GM12878 (cell line): ENCODE measurements at regions of chr11 and their contacts with region 1.

Region 1: DNA sequence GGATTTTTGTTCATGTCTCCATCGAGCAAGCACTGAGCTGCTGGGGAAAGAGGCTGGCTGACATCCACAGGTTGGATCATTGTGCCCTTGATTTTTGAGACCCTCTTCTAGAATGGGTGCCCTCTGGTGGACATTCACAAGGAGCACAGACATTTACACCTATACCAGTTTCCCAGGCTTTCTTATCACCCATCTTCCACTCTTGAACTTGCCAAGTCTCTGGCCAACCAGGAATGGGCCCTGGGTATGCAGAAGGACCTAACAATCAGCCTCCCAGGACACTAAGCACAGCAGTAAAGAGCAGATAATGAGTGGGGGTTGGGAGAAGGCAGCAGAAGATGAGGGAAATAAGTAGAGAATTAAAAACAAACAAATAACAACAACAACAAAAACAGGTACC is 5.7 kb upstream of the INTS4 start:
- DNase-seq: no peak
- ATAC-seq: peak; percentile 96
- H3K4me3 ChIP-seq: no peak overlapping the region
- H3K27ac ChIP-seq: no peak overlapping the region
- H3K4me1 ChIP-seq: no peaks in the 10 kb centered on the region
- H3K27me3 ChIP-seq: no peaks in the 10 kb centered on the region
- CTCF ChIP-seq: peak; percentile 64 to 71 (median 67)
- EP300 ChIP-seq: no peak
- POLR2A ChIP-seq: no peak
- RAD21 ChIP-seq: peak; percentile 51

Region 2: GRCh38 chr11:77776455-77776854 is 223.7 kb before region 1 on chr11:
- CTCF ChIA-PET with region 1: interaction called, 14 read pairs
- POLR2A ChIA-PET with region 1: no interaction called
- RAD21 ChIA-PET with region 1: interaction called, 4 read pairs
- SMC1A ChIA-PET with region 1: interaction called, 11 read pairs
- in situ Hi-C with region 1: loop called (anchors 5 kb)
- intact Hi-C with region 1: loop called (anchors 1 kb)
- DNase-seq: no peak
- ATAC-seq: peak; percentile 62
- H3K4me3 ChIP-seq: no peak overlapping the region
- H3K27ac ChIP-seq: no peak overlapping the region
- H3K4me1 ChIP-seq: no peaks in the 10 kb centered on the region
- H3K27me3 ChIP-seq: no peaks in the 10 kb centered on the region
- CTCF ChIP-seq: peak; percentile 3 to 46 (median 18); a peak in 4 of 6 replicates
- EP300 ChIP-seq: no peak
- POLR2A ChIP-seq: no peak
- RAD21 ChIP-seq: peak; percentile 50

Region 3: DNA sequence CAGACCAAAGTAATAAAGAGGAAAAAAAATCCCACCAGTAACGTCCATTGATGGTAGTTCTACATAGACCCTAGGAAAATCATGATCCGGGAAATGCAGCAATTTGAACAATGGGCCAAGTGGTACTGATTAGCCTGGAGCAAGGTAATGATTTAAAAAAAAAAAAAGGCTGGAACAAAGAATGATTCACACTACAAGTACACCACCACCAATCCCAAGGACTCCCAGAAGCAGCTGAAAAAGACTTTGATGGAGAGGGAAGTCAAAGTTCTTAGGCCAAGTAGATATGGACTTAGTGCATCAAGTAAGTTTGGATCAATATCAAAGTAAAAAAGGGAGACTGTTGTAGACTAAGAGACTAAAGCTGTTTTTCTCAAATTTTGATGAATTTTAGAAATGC is 11.1 kb after region 1 on chr11:
- CTCF ChIA-PET with region 1: interaction called, 12 read pairs
- POLR2A ChIA-PET with region 1: interaction called, 4 read pairs
- RAD21 ChIA-PET with region 1: no interaction called
- SMC1A ChIA-PET with region 1: interaction called, 3 read pairs
- in situ Hi-C with region 1: no loop called
- intact Hi-C with region 1: no loop called
- DNase-seq: no peak
- ATAC-seq: no peak
- H3K4me3 ChIP-seq: no peak overlapping the region
- H3K27ac ChIP-seq: no peak overlapping the region
- H3K4me1 ChIP-seq: peaks cover 7% of the 10 kb centered on the region
- H3K27me3 ChIP-seq: no peaks in the 10 kb centered on the region
- CTCF ChIP-seq: no peak
- EP300 ChIP-seq: no peak
- POLR2A ChIP-seq: no peak
- RAD21 ChIP-seq: no peak

Region 4: DNA sequence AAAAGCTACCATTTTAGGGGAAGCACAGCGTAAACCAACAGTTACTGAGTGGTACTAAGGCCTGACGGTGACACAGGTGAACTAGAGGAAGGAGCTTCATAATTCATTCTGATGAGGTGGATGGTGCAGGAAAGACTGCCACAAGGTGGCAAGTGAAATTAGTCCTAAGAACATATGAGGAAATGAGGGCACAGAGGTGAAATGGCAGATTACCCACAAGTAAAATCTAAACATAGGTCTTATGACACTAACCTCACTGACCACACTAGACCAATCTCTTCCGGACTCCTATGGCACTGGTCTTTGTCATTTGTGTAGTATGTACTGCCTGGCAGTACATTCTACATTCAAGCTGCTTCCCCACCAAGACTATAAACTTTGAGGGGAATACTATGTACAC is 397.2 kb after region 1 on chr11:
- CTCF ChIA-PET with region 1: no interaction called
- POLR2A ChIA-PET with region 1: no interaction called
- RAD21 ChIA-PET with region 1: no interaction called
- SMC1A ChIA-PET with region 1: no interaction called
- in situ Hi-C with region 1: no loop called
- intact Hi-C with region 1: no loop called
- DNase-seq: peak; percentile 70
- ATAC-seq: peak; percentile 96
- H3K4me3 ChIP-seq: no peak overlapping the region
- H3K27ac ChIP-seq: no peak overlapping the region
- H3K4me1 ChIP-seq: peaks cover 4% of the 10 kb centered on the region; the same call in 1 of the 2 replicates
- H3K27me3 ChIP-seq: no peaks in the 10 kb centered on the region
- CTCF ChIP-seq: 0 out of 6 replicates have a peak, but pooled peaks of 1 of the 3 experiments have one; percentile 4
- EP300 ChIP-seq: no peak
- POLR2A ChIP-seq: no peak
- RAD21 ChIP-seq: no peak